Vagina (tissue), 2 donors: ENCODE measurements at regions of chr13 and their contacts with region 1.

Region 1: DNA sequence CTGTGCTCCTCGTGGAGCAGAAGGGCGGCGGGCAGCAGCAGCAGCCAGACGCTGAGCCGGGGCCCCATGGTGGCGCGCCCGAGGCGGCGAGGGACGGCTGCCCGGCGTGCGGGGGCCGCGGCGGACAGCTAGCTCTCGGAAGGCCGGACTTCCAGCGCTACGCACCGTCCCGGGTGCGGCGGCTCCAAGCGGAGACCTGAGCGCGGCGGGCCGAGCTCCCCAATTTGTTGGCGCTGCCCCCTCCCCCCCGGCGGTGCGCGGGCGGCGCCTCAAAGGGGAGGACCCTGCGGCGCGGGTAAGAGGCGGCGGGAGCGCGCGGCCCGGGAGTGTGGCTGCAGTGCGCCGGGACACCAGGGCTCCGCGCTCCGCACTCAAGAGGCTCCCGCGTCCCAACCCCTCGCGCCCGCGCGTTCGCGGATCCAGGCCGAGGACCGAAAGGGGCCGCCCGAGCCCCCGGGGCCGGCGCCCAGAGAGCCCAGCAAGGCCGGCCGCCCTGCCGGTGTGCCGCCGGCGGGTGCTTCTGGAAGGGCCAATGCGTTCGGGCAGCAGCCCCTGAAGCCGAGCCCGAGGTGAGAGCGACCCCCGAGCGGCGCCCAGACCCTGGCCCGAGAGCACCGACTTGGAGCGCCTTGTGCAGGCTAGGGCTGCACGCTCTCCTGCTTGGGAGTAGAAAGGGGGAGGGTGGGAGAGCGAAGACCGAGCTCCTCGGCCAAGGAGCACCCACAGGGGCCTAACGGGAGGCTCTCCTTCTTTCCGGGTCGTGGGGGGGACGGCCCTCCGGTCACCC is at the starts of genes COL4A1 and COL4A2:
- DNase-seq: peak in 1 of 2 donors; percentile 87
- H3K4me3 ChIP-seq: peak within 1 kb of the TSS; percentile 66 to 84
- H3K27ac ChIP-seq: peak within 1 kb of the TSS; percentile 95
- H3K4me1 ChIP-seq: peaks cover 49% of the 10 kb centered on the region
- H3K27me3 ChIP-seq: no peaks in the 10 kb centered on the region
- CTCF ChIP-seq: no peak
- POLR2A ChIP-seq: peak; percentile 63 to 95
- total RNA-seq, gene COL4A1: 178 TPM
- total RNA-seq, gene COL4A2: 180 TPM

Region 2: GRCh38 chr13:110233181-110233950 is 73.8 kb before region 1 on chr13:
- intact Hi-C with region 1: no loop called
- DNase-seq: peak in 1 of 2 donors; percentile 92
- H3K4me3 ChIP-seq: peak overlapping the region; percentile 20 to 27
- H3K27ac ChIP-seq: peak overlapping the region; percentile 80
- H3K4me1 ChIP-seq: peaks cover 53% of the 10 kb centered on the region
- H3K27me3 ChIP-seq: no peaks in the 10 kb centered on the region
- CTCF ChIP-seq: no peak
- POLR2A ChIP-seq: no peak

Region 3: GRCh38 chr13:110245416-110245899 is 61.7 kb before region 1 on chr13:
- intact Hi-C with region 1: loop called (anchors 5 kb)
- DNase-seq: peak in 1 of 2 donors; percentile 77
- H3K4me3 ChIP-seq: no peak overlapping the region
- H3K27ac ChIP-seq: peak overlapping the region; percentile 36
- H3K4me1 ChIP-seq: peaks cover 57% of the 10 kb centered on the region
- H3K27me3 ChIP-seq: no peaks in the 10 kb centered on the region
- CTCF ChIP-seq: no peak
- POLR2A ChIP-seq: no peak

Region 4: DNA sequence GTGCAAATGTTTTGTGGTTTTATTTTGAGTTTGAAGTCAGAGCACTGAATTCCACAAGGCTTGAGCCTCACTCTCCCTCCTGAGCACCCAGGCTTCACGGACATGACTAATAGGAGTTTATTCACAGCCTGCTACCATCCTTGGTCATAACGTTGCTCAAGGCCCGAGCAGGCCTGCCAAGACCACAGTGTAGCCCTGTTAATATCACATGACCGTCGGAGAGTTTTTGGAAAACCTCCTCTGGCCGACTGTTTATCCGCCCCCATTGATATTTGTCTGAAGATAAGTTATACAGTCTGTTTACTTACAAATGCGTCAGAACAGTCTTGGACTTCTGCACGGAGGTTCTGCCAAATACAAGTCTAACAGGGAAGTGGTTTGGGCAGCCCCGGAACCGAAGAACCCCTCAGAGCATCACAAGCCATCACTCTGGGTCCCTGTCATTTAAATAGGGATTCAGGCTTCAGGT is 89.8 kb after region 1 on chr13:
- intact Hi-C with region 1: loop called (anchors 5 kb)
- DNase-seq: peak in 1 of 2 donors; percentile 99
- H3K4me3 ChIP-seq: peak overlapping the region; percentile 19 to 30
- H3K27ac ChIP-seq: peak overlapping the region; percentile 89
- H3K4me1 ChIP-seq: peaks cover 44% of the 10 kb centered on the region
- H3K27me3 ChIP-seq: no peaks in the 10 kb centered on the region
- CTCF ChIP-seq: no peak
- POLR2A ChIP-seq: no peak